CD8-positive, alpha-beta T cell (primary cell): ENCODE measurements at regions of chr4 and their contacts with region 1.

Region 1: GRCh38 chr4:67327262-67328017 is 217.9 kb downstream of the CENPC start:
- DNase-seq: peak; percentile 1 to 64 (median 37)
- ATAC-seq: peak; percentile 70
- H3K4me3 ChIP-seq: no peak overlapping the region
- H3K4me3 Mint-ChIP-seq: no peak overlapping the region
- H3K27ac ChIP-seq: no peak overlapping the region
- H3K27ac Mint-ChIP-seq: no peak overlapping the region
- H3K4me1 ChIP-seq: no peaks in the 10 kb centered on the region
- H3K4me1 Mint-ChIP-seq: peaks cover 5% of the 10 kb centered on the region
- H3K27me3 ChIP-seq: peaks cover 0 to 4% of the 10 kb centered on the region in 2 experiments
- H3K27me3 Mint-ChIP-seq: peaks cover 9% of the 10 kb centered on the region
- CTCF ChIP-seq: peak; percentile 76

Region 2: GRCh38 chr4:67087897-67088296 is 239.5 kb before region 1 on chr4:
- CTCF ChIA-PET with region 1: interaction called, 5 read pairs
- POLR2A ChIA-PET with region 1: no interaction called
- intact Hi-C with region 1: loop called in 1 of 2 experiments (anchors 1 kb)
- DNase-seq: peak in 4 of 9 experiments; percentile 12 to 29 (median 20)
- ATAC-seq: no peak
- H3K4me3 ChIP-seq: no peak overlapping the region
- H3K4me3 Mint-ChIP-seq: no peak overlapping the region
- H3K27ac ChIP-seq: no peak overlapping the region
- H3K27ac Mint-ChIP-seq: no peak overlapping the region
- H3K4me1 ChIP-seq: no peaks in the 10 kb centered on the region
- H3K4me1 Mint-ChIP-seq: no peaks in the 10 kb centered on the region
- H3K27me3 ChIP-seq: no peaks in the 10 kb centered on the region
- H3K27me3 Mint-ChIP-seq: no peaks in the 10 kb centered on the region
- CTCF ChIP-seq: peak; percentile 48